Activated naive CD4-positive, alpha-beta T cell treated with anti-CD3 and anti-CD28 coated beads for 36 hours (primary cell): ENCODE measurements at regions of chr7 and their contacts with region 1.

Region 1: GRCh38 chr7:139016931-139017511 is 18.8 kb downstream of the ZC3HAV1L start:
- DNase-seq: peak; percentile 80
- H3K4me3 Mint-ChIP-seq: no peak overlapping the region
- H3K27ac Mint-ChIP-seq: no peak overlapping the region
- H3K4me1 Mint-ChIP-seq: peaks cover 4% of the 10 kb centered on the region
- H3K27me3 Mint-ChIP-seq: no peaks in the 10 kb centered on the region

Region 2: DNA sequence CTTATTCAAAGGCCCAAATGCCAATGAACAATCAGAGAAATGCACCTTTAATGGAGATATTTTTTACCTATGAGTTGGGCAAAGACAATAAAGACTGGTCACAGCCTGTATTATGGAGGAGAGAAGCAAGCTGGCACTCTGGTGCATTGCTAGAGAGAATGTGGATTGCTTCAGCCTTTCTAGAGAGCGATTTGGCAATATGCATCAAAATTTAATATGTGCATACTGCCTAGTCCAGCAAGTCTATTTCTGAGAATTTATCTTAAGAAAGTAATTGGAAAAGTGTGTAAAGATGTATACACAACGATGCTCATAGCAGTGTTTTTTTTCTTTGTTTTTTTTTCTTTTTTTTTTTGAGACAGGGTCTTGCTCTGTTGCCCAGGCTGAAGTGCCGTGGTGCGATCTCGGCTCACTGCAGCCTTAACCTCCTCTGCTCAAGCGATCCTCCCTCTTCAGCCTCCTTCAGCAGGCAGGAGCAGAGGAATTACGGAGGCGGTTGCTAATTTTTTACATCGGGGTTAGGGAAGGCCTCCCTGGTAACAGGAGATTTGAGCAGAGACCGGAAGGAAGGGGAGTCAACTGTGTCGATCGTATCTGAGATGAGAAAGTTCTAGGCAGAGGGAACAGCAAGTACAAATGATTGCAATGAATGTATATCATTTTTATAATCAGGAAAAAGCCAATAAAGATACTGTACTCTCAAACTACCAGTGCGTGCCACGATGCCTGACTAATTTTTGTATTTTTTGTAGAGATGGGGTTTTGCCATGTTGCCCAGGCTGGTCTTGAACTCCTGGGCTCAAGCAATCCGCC is 52.2 kb before region 1 on chr7:
- CTCF ChIA-PET with region 1: no interaction called
- intact Hi-C with region 1: no loop called
- DNase-seq: no peak
- H3K4me3 Mint-ChIP-seq: no peak overlapping the region
- H3K27ac Mint-ChIP-seq: no peak overlapping the region
- H3K4me1 Mint-ChIP-seq: peaks cover 3% of the 10 kb centered on the region
- H3K27me3 Mint-ChIP-seq: no peaks in the 10 kb centered on the region

Region 3: DNA sequence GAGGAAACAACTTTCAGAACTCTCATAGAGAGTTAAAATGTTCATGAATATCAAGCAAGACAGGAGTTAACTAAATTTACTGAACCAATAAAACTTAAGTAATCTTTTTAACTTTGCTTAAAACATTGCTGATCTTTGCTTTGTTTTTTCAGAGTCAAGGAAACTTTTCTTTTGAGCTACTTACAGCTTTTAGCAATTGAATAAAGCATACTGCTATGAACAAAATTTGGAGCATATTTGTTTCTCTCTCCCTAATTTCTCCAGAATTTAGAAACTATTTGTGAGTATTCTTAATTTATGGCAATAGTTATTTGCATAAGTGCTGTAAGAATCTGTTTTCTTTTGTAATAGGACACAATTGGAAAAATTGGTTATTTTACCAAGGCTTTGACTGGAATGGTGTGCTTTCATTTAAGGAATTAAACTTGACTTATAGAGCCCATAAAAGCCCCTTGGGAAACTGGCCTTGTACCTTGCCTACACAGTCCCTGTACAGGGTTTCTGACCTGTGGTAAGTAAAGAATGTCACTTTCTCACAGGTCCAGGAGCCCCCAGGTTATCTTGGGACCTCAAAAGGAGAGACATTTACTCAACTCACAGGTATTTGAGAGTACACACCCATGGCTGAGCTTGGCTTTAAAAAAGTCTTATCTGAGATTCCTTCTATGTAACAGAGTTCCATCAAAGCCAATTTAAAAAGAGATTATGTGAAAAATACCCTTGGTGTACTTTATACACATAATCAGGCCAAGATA is 12.5 kb before region 1 on chr7:
- CTCF ChIA-PET with region 1: interaction called, 7 read pairs
- intact Hi-C with region 1: loop called (anchors 1 kb)
- DNase-seq: no peak
- H3K4me3 Mint-ChIP-seq: no peak overlapping the region
- H3K27ac Mint-ChIP-seq: no peak overlapping the region
- H3K4me1 Mint-ChIP-seq: peaks cover 2% of the 10 kb centered on the region
- H3K27me3 Mint-ChIP-seq: no peaks in the 10 kb centered on the region

Region 4: DNA sequence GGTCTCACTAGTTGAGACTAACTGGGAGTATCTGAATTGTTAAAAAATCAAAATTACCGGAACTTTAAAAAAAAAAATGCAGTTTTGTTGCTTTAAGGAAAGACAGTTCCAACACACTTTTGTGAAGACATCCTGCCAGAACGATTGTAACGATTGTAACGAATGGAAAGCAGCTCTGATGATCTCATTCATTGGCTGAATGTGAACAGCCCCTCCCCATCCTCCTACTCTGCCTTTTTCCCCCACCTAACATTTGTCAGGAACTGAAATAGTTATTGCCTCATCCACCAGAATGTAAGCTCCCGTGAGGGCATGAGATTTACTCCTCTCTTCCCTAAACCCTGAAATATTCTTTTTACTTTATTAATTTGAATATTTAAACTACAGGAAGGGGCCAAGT is 41.9 kb after region 1 on chr7:
- CTCF ChIA-PET with region 1: interaction called, 17 read pairs
- intact Hi-C with region 1: no loop called
- DNase-seq: no peak
- H3K4me3 Mint-ChIP-seq: no peak overlapping the region
- H3K27ac Mint-ChIP-seq: peak overlapping the region; percentile 86
- H3K4me1 Mint-ChIP-seq: peaks cover 73% of the 10 kb centered on the region
- H3K27me3 Mint-ChIP-seq: no peaks in the 10 kb centered on the region

Region 5: DNA sequence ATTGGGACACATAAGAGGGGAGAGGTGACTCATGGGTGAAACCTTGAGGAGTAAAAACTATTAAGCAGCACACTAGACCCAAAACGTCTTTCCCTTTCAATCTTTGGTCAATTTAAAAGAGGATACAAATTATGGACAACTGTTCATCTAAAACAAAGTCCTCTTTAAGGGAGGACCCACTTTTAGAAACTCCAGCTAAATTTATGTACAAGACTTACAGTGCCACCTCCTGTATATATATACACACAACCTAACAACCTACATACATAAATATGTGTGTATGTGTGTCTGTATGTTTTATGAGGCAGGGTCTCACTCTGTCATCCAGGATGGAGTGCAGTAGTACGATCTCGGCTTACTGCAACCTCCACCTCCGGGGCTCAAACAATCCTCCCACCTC is 110.6 kb after region 1 on chr7:
- CTCF ChIA-PET with region 1: interaction called, 11 read pairs
- intact Hi-C with region 1: loop called (anchors 1 kb)
- DNase-seq: no peak
- H3K4me3 Mint-ChIP-seq: no peak overlapping the region
- H3K27ac Mint-ChIP-seq: no peak overlapping the region
- H3K4me1 Mint-ChIP-seq: peaks cover 45% of the 10 kb centered on the region
- H3K27me3 Mint-ChIP-seq: no peaks in the 10 kb centered on the region